ENCODE measurements at regions of chr1 and their contacts with region 1.

Region 1: DNA sequence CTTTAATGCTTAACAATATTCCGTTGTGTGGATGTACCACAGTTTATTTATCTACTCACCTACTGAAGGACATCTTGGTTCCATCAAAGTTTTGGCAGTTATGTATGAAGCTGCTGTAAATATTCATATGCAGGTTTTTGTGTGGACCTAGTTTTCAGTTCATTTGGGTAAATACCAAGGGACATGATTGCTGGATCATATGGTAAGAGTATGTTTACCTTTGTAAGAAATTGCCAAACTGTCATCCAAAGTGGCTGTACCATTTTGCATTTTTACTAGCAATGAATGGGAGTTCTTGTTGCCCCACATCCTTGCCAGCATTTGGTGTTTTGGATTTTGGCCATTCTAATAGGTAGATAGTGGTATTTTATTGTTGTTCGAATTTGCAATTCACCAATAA is 10.0 kb downstream of the ZSCAN20 start:
- DNase-seq: no peak
- ATAC-seq: no peak
- H3K4me3 ChIP-seq: no peak overlapping the region
- H3K27ac ChIP-seq: no peak overlapping the region
- H3K4me1 ChIP-seq: no peaks in the 10 kb centered on the region
- H3K27me3 ChIP-seq: no peaks in the 10 kb centered on the region
- CTCF ChIP-seq: no peak

Region 2: DNA sequence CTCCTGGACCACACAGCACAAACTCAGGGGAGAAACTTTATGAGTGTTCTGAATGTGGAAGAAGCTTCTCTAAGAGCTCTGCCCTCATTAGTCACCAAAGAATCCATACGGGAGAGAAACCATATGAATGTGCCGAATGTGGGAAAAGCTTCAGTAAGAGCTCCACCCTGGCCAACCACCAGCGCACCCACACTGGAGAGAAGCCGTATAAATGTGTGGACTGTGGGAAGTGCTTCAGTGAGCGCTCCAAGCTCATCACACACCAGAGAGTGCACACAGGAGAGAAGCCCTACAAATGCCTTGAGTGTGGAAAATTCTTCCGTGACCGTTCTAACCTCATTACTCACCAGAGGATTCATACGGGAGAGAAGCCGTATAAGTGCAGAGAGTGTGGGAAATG is 12.5 kb after region 1 on chr1:
- CTCF ChIA-PET with region 1: no interaction called
- POLR2A ChIA-PET with region 1: interaction called, 13 read pairs
- in situ Hi-C with region 1: no loop called
- intact Hi-C with region 1: no loop called
- DNase-seq: no peak
- ATAC-seq: no peak
- H3K4me3 ChIP-seq: no peak overlapping the region
- H3K27ac ChIP-seq: no peak overlapping the region
- H3K4me1 ChIP-seq: no peaks in the 10 kb centered on the region
- H3K27me3 ChIP-seq: no peaks in the 10 kb centered on the region
- CTCF ChIP-seq: no peak

Region 3: DNA sequence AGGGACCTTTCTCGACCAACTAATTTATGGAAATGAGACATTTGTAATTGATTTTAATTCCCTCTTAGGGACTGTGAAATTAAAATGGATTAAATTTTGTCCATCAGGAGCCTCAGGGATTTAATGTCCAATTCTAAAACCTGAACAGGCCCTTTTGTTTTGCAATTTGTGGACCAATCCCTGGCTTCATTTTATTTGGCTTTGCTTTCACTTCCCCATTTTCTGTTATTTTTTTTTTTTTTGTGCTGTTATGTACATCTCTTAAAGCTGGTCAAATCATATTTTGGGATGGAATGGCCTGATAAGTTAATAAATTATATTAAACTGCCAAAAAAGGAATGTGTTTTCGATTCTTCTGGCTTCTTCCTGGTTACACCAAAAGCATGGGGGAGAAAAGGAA is 18.9 kb after region 1 on chr1:
- CTCF ChIA-PET with region 1: no interaction called
- POLR2A ChIA-PET with region 1: interaction called, 11 read pairs
- in situ Hi-C with region 1: no loop called
- intact Hi-C with region 1: no loop called
- DNase-seq: no peak
- ATAC-seq: no peak
- H3K4me3 ChIP-seq: no peak overlapping the region
- H3K27ac ChIP-seq: no peak overlapping the region
- H3K4me1 ChIP-seq: no peaks in the 10 kb centered on the region
- H3K27me3 ChIP-seq: no peaks in the 10 kb centered on the region
- CTCF ChIP-seq: no peak